Activated CD8-positive, alpha-beta T cell treated with anti-CD3 and anti-CD28 coated beads for 36 hours (primary cell): ENCODE measurements at regions of chr17 and their contacts with region 1.

Region 1: DNA sequence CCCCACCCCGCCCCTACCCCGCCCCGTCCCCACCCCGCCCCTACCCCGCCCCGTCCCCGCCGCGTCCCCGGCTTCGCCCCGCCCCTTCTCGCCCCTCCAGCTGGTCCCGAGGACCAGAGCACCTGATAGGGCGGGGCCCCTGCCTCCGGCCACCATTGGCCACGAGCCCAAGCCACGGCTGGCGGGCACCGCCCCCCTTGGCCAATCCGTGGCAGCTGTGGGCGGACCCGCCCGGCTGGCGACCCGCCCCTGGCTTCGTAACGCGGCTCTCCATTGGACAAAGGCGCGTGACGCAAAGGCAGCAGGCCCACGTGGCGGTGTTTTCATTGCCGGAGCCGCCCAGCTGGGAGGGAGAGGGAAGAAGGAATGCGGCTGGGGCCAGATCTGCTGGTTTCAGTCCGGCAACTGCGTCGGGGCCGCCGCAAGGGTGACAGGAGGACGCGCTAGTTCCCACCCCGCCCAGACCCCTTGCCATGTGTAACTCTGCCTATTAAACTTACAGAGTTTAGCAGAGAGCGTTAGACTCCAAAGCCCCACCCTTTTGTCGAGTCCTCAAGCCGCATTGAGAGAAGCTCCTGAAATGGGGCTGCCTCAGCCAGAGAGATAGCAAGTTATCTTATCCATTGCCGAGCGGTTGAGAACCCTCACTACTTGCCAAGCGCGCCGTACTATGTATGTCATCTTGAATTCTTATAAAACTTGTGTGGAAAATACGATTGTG is 403 bp upstream of the WIPI1 start:
- DNase-seq: peak; percentile 98
- ATAC-seq: peak; percentile 93
- H3K4me3 Mint-ChIP-seq: peak overlapping the region; percentile 83
- H3K27ac Mint-ChIP-seq: peak overlapping the region; percentile 30
- H3K4me1 Mint-ChIP-seq: peaks cover 57% of the 10 kb centered on the region
- H3K27me3 Mint-ChIP-seq: no peaks in the 10 kb centered on the region
- CTCF ChIP-seq: no peak

Region 2: DNA sequence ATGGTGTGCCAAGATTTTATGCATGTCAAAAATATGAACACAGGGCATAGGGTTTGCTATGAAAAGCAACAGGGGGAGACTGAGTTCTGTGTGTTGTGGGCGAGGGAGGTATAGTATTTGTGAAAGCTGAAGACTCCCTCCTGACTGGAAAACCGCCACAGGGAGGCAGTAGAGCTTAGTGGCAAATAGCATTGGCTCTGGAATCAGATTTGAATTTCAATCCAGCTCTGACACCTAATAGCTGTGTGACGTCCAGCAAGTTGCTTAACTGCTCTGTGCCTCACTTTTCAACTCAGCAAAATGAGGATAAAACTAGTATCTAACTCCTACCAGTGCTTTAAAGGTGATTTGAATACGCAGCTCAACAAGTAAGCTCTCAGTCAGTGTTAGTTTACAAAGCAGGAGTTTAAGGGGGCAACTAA is 400.2 kb before region 1 on chr17:
- CTCF ChIA-PET with region 1: interaction called, 5 read pairs
- POLR2A ChIA-PET with region 1: no interaction called
- intact Hi-C with region 1: loop called (anchors 10 kb)
- DNase-seq: peak; percentile 70
- ATAC-seq: peak; percentile 86
- H3K4me3 Mint-ChIP-seq: no peak overlapping the region
- H3K27ac Mint-ChIP-seq: no peak overlapping the region
- H3K4me1 Mint-ChIP-seq: peaks cover 5% of the 10 kb centered on the region
- H3K27me3 Mint-ChIP-seq: no peaks in the 10 kb centered on the region
- CTCF ChIP-seq: peak; percentile 57

Region 3: GRCh38 chr17:68172461-68172954 is 285.2 kb before region 1 on chr17:
- CTCF ChIA-PET with region 1: interaction called, 15 read pairs
- POLR2A ChIA-PET with region 1: no interaction called
- intact Hi-C with region 1: loop called (anchors 2 kb)
- DNase-seq: peak; percentile 84
- ATAC-seq: peak; percentile 82
- H3K4me3 Mint-ChIP-seq: no peak overlapping the region
- H3K27ac Mint-ChIP-seq: no peak overlapping the region
- H3K4me1 Mint-ChIP-seq: peaks cover 20% of the 10 kb centered on the region
- H3K27me3 Mint-ChIP-seq: peaks cover 3% of the 10 kb centered on the region
- CTCF ChIP-seq: peak; percentile 99

Region 4: DNA sequence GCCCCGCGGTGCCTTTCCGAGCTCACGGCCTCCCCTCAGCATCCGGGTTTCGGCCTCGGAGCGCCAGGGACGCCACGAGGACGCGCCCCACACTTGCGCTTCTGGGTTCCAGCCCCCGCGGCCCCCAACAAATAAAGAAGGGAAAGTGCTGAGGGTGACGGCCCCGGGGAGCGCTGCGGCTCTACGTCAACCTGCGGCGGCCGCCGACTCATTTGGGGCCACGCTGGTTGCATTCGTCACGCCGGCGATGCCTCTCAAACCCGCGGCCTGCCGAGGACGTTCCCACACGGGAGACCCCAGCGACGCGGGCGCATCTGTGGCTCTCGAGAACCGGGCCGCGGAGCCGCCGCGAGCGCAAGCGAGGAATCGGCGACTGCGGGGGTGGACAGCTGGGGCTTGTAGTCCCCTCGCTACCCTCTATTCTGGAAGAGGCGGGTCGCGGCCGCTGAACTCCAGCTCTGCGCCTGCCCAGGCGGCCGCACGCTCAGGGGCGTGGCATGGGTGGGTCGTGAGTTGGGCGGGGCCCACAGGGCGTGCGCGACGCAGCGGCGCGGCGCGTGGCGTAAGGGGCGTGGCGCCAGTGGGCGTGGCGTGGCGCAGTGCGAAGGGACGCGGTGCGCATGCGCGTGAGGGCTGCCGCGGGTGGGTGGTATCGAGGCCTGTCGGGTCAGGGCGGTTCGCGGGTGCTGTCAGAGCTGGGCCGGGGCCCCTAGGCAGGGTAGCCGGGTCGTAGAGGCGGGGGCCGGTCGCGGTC is 210.1 kb before region 1 on chr17 and contains the start of gene AMZ2:
- CTCF ChIA-PET with region 1: interaction called, 14 read pairs
- POLR2A ChIA-PET with region 1: interaction called, 19 read pairs
- intact Hi-C with region 1: no loop called
- DNase-seq: peak; percentile 95
- ATAC-seq: peak; percentile 88
- H3K4me3 Mint-ChIP-seq: peak within 1 kb of the TSS; percentile 87
- H3K27ac Mint-ChIP-seq: peak within 1 kb of the TSS; percentile 98
- H3K4me1 Mint-ChIP-seq: peaks cover 42% of the 10 kb centered on the region
- H3K27me3 Mint-ChIP-seq: no peaks in the 10 kb centered on the region
- CTCF ChIP-seq: no peak
- total RNA-seq, gene AMZ2: 132 to 141 TPM

Region 5: GRCh38 chr17:68260051-68260762 is 197.5 kb before region 1 on chr17:
- CTCF ChIA-PET with region 1: interaction called, 43 read pairs
- POLR2A ChIA-PET with region 1: interaction called, 3 read pairs
- intact Hi-C with region 1: loop called (anchors 2 kb)
- DNase-seq: no peak
- ATAC-seq: no peak
- H3K4me3 Mint-ChIP-seq: peak overlapping the region; percentile 69
- H3K27ac Mint-ChIP-seq: peak overlapping the region; percentile 93
- H3K4me1 Mint-ChIP-seq: peaks cover 63% of the 10 kb centered on the region
- H3K27me3 Mint-ChIP-seq: no peaks in the 10 kb centered on the region
- CTCF ChIP-seq: no peak

Region 6: DNA sequence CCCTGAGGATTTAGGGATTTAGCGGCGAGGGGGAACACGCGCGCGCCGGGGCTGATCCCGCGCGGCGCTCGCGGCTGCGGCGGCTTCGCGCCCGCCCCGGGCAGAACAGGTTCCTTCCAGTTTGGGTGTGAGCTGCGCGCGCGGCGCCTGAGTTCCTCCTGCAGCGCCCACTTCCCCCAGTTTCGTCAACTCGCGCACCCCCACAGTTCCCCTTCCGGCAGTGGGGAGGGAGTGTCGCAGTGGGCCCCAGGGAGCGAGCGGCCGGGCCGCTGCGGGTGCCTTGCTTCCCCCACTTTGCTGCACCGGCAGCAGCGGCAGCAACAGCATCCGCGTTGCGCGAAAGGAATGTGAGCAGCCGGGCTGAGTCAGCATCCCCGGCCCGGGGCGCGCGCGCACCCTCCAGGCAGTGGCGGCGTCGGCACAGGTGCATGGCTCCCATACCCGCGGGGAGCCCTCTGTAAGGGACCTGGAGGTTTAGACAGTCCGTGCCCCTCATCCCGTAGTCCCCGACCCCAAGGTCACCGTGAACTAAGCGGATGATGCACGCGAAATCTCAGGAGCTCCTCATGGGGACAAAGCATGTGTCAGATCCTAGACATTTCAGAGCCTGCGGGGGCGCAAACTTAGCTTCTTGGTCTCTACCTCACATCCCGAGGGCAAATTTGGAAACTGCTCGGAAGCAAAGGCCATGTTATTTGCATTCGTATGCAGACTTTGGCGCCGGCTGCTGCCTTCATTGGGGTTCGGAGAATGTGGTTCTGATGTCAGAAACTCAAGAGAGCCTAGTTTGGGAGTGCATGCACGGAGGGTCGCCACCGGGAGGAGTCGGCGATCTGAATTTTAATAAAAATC is 165.6 kb before region 1 on chr17:
- CTCF ChIA-PET with region 1: interaction called, 6 read pairs
- POLR2A ChIA-PET with region 1: interaction called, 31 read pairs
- intact Hi-C with region 1: no loop called
- DNase-seq: peak; percentile 93
- ATAC-seq: peak; percentile 69
- H3K4me3 Mint-ChIP-seq: peak overlapping the region; percentile 94
- H3K27ac Mint-ChIP-seq: peak overlapping the region; percentile 93
- H3K4me1 Mint-ChIP-seq: peaks cover 65% of the 10 kb centered on the region
- H3K27me3 Mint-ChIP-seq: no peaks in the 10 kb centered on the region
- CTCF ChIP-seq: no peak

Region 7: GRCh38 chr17:68310152-68310551 is 147.5 kb before region 1 on chr17:
- CTCF ChIA-PET with region 1: no interaction called
- POLR2A ChIA-PET with region 1: no interaction called
- intact Hi-C with region 1: no loop called
- DNase-seq: peak; percentile 83
- ATAC-seq: peak; percentile 96
- H3K4me3 Mint-ChIP-seq: no peak overlapping the region
- H3K27ac Mint-ChIP-seq: no peak overlapping the region
- H3K4me1 Mint-ChIP-seq: peaks cover 45% of the 10 kb centered on the region
- H3K27me3 Mint-ChIP-seq: no peaks in the 10 kb centered on the region
- CTCF ChIP-seq: no peak